ENCODE measurements at regions of chr13 and their contacts with region 1.

Region 1: GRCh38 chr13:38763439-38764381 is 76.8 kb downstream of the FREM2 start:
- DNase-seq: no peak
- H3K4me3 ChIP-seq: no peak overlapping the region
- H3K27ac ChIP-seq: no peak overlapping the region
- H3K4me1 ChIP-seq: peaks cover 0 to 17% (median 4%) of the 10 kb centered on the region in 4 donors
- H3K27me3 ChIP-seq: no peaks in the 10 kb centered on the region
- CTCF ChIP-seq: peak in 2 of 4 experiments; percentile 53 to 59
- EP300 ChIP-seq: no peak
- POLR2A ChIP-seq: no peak

Region 2: GRCh38 chr13:38686577-38687245 is 77.0 kb before region 1 on chr13 and contains the start of gene FREM2:
- intact Hi-C with region 1: loop called (anchors 2 kb)
- DNase-seq: peak; percentile 68
- H3K4me3 ChIP-seq: peak within 1 kb of the TSS; percentile 32 to 63 (median 56)
- H3K27ac ChIP-seq: peak within 1 kb of the TSS in 3 of 4 donors; percentile 33 to 59 (median 56)
- H3K4me1 ChIP-seq: peaks cover 0 to 24% (median 19%) of the 10 kb centered on the region in 4 donors
- H3K27me3 ChIP-seq: peaks cover 0 to 22% (median 0%) of the 10 kb centered on the region in 3 donors
- CTCF ChIP-seq: no peak
- EP300 ChIP-seq: no peak
- POLR2A ChIP-seq: no peak
- total RNA-seq, gene FREM2: 2.1 to 8.2 (median 7.1) TPM

Region 3: DNA sequence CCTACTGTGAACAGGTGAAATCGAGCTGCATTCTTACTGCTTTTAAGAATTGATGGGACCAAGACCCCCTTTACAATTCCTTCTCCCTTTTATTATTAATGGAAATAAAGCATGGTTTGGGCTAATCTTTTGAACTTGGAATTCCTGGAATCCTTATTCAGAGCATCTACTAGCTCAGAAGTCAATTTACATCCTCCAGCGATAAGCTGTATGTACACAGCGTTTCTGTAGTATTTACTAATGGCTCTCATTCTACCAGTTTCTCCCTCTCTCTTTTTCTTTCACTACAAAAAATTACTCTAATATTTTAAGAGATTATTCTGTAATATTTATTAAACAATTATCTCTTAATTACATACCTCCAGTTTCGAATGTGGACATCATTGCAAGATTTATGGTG is 45.3 kb before region 1 on chr13:
- intact Hi-C with region 1: no loop called
- DNase-seq: no peak
- H3K4me3 ChIP-seq: no peak overlapping the region
- H3K27ac ChIP-seq: no peak overlapping the region
- H3K4me1 ChIP-seq: no peaks in the 10 kb centered on the region
- H3K27me3 ChIP-seq: no peaks in the 10 kb centered on the region
- CTCF ChIP-seq: no peak
- EP300 ChIP-seq: no peak
- POLR2A ChIP-seq: no peak

Region 4: DNA sequence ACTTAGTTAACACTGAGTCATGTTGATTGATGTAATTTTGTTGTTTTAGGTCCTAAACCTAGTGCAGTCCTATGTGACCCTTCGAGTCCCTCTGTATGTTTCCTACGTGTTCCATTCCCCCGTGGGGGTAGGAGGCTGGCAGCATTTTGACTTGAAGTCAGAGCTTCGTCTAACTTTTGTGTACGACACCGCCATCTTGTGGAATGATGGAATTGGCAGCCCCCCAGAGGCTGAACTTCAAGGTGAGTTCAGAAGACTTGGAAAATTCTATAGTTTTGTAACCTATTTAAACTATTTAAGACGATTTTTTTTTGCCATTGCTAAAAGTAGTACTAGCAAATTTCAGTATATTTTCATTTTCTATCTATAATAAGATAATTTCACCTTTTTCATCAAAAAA is 109.0 kb after region 1 on chr13:
- intact Hi-C with region 1: loop called (anchors 2 kb)
- DNase-seq: peak; percentile 69
- H3K4me3 ChIP-seq: no peak overlapping the region
- H3K27ac ChIP-seq: no peak overlapping the region
- H3K4me1 ChIP-seq: no peaks in the 10 kb centered on the region
- H3K27me3 ChIP-seq: no peaks in the 10 kb centered on the region
- CTCF ChIP-seq: peak in 1 of 4 experiments; percentile 43
- EP300 ChIP-seq: no peak
- POLR2A ChIP-seq: no peak